PC-3 (cell line): ENCODE measurements at regions of chr14 and their contacts with region 1.

Region 1: DNA sequence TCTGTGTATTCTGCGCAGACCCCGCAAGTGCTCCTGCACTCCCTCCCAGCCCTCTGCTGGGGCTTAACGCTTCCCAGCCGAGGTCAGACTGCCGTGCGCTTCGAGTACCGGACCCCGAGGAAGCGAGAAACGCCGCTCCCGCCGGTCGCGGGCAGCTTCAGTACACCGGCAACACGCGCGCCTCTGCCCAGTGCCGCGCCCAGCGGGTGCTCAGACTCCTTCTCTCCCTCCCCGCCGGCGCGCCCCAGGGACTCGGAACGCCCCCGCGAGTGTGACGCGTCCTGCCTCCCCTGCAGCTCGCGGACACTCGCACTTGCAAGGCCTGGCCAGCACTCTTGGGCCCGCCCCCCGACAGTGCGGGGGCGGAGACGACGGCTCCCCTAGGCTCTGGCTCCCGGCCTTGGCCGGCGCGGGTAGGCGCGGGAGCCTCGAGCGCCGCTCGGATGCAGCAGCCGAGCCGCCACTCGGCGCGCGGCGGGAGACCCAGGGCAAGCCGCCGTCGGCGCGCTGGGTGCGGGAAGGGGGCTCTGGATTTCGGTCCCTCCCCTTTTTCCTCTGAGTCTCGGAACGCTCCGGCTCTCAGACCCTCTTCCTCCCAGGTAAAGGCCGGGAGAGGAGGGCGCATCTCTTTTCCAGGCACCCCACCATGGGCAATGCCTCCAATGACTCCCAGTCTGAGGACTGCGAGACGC is at the start of gene PTGER2:
- DNase-seq: peak; percentile 91
- ATAC-seq: peak; percentile 95
- H3K4me3 ChIP-seq: peak within 1 kb of the TSS; percentile 71
- H3K27ac ChIP-seq: no peak within 1 kb of the TSS
- H3K4me1 ChIP-seq: peaks cover 10% of the 10 kb centered on the region
- H3K27me3 ChIP-seq: no peaks in the 10 kb centered on the region
- CTCF ChIP-seq: no peak
- total RNA-seq, gene PTGER2: 4.6 and 4.7 TPM in 2 replicates

Region 2: DNA sequence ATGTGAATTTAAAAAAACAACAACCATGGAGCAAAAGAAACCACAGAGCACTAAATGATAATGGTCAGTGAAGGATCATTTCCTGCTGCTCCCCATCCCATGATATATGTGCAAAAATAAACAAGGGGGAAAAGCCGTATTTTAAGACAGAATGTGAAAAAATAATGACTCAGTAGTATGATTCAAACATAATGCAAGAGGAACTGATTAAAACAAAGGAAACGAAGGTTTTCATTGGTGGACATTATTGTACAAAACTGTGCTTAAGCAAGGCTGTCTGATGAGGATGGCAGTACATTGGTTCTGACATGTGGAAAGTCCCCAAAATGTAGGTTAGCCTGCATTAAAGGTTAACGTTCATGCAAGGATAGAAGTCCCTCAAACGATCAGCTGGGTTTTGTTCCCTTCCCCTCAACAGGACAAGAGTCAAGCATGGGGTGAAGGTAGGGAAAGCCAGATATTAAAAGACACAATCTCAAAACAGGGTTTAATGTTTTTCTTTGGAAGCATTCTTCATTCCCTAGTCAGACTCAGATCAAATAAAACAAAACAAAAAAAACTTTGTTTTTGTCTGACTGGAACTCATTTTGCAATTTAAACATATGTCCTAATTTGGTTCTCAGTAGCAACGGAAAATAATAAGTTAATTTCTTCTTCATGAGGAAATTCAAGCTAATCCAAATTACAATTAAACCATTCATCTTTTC is 72.8 kb before region 1 on chr14:
- CTCF ChIA-PET with region 1: no interaction called
- POLR2A ChIA-PET with region 1: no interaction called
- intact Hi-C with region 1: no loop called
- DNase-seq: peak; percentile 43
- ATAC-seq: peak; percentile 78
- H3K4me3 ChIP-seq: no peak overlapping the region
- H3K27ac ChIP-seq: 0 out of 2 replicates have a peak overlapping the region, but pooled peaks have one; percentile 13
- H3K4me1 ChIP-seq: peaks cover 14% of the 10 kb centered on the region
- H3K27me3 ChIP-seq: no peaks in the 10 kb centered on the region
- CTCF ChIP-seq: no peak

Region 3: GRCh38 chr14:52338051-52338681 is 24.1 kb after region 1 on chr14:
- CTCF ChIA-PET with region 1: no interaction called
- POLR2A ChIA-PET with region 1: interaction called, 11 read pairs
- intact Hi-C with region 1: no loop called
- DNase-seq: peak; percentile 95
- ATAC-seq: peak; percentile 100
- H3K4me3 ChIP-seq: no peak overlapping the region
- H3K27ac ChIP-seq: peak overlapping the region; percentile 43
- H3K4me1 ChIP-seq: peaks cover 33% of the 10 kb centered on the region
- H3K27me3 ChIP-seq: no peaks in the 10 kb centered on the region
- CTCF ChIP-seq: no peak